ENCODE measurements at regions of chr1 and their contacts with region 1.

Region 1: GRCh38 chr1:109474697-109475096 is 8.4 kb downstream of the SYPL2 start:
- DNase-seq: peak in 1 of 5 donors; percentile 21
- ATAC-seq: peak; percentile 55 to 70 (median 65)
- H3K4me3 ChIP-seq: no peak overlapping the region
- H3K27ac ChIP-seq: no peak overlapping the region
- H3K4me1 ChIP-seq: peaks cover 0 to 21% (median 5%) of the 10 kb centered on the region in 12 donors
- H3K27me3 ChIP-seq: peaks cover 0 to 23% (median 0%) of the 10 kb centered on the region in 9 donors
- CTCF ChIP-seq: no peak
- POLR2A ChIP-seq: no peak

Region 2: GRCh38 chr1:109161858-109162606 is 312.7 kb before region 1 on chr1:
- intact Hi-C with region 1: no loop called
- DNase-seq: peak in 3 of 5 donors; percentile 16 to 57 (median 34)
- ATAC-seq: peak; percentile 38 to 83 (median 74)
- H3K4me3 ChIP-seq: peak overlapping the region in 2 of 12 donors; percentile 25 to 30
- H3K27ac ChIP-seq: peak overlapping the region in 6 of 12 donors; percentile 11 to 77 (median 28)
- H3K4me1 ChIP-seq: peaks cover 0 to 18% (median 3%) of the 10 kb centered on the region in 12 donors
- H3K27me3 ChIP-seq: no peaks in the 10 kb centered on the region
- CTCF ChIP-seq: no peak
- POLR2A ChIP-seq: no peak

Region 3: GRCh38 chr1:109438798-109439297 is 35.8 kb before region 1 on chr1:
- intact Hi-C with region 1: loop called in 1 of 10 experiments (anchors 1 kb)
- DNase-seq: peak in 4 of 5 donors; percentile 30 to 49 (median 36)
- ATAC-seq: peak in 3 of 4 donors; percentile 77 to 87 (median 79)
- H3K4me3 ChIP-seq: no peak overlapping the region
- H3K27ac ChIP-seq: peak overlapping the region in 6 of 12 donors; percentile 24 to 61 (median 51)
- H3K4me1 ChIP-seq: peaks cover 0 to 8% (median 0%) of the 10 kb centered on the region in 12 donors
- H3K27me3 ChIP-seq: peaks cover 0 to 16% (median 0%) of the 10 kb centered on the region in 9 donors
- CTCF ChIP-seq: no peak
- POLR2A ChIP-seq: no peak

Region 4: DNA sequence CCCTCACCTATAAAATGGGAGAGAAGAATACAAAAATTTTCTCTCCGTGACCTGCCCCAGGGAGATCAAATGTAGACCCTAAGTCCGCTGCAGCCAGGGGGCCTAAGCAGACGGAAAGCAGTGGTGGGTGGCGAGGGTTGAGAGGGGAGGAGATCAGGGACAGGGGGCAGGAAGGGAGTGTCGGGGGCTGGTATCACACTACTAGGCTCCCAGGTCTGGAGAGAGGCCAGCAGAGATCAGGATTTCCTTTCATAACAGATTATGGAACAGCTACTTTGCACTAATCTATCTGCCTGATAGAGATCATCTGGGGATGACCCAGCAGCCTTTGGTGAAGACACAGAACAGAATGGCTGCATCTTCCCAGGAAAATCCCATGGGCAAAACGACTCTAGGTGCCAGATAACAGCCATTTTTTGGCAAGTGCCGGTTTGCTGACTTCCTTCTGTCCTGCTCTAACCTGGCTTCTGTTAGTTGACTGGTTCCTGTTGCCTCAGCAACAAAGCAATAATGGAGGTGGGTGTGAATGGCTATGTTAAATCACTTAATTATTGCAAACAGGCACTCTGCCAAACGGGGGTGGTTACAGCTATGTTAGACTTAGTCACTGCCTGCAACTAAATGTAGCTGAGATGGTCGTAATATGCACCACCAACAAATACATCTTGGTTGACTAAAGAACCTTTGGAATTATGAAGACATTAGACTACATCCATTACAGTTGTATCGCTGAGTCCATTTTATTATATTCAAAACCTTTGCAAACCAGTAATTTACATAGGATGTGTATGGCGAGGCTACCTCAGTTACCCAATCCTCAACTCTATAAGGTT is 319.0 kb after region 1 on chr1:
- intact Hi-C with region 1: no loop called
- DNase-seq: peak in 4 of 5 donors; percentile 48 to 75 (median 65)
- ATAC-seq: peak; percentile 44 to 76 (median 52)
- H3K4me3 ChIP-seq: no peak overlapping the region
- H3K27ac ChIP-seq: peak overlapping the region in 10 of 12 donors; percentile 5 to 70 (median 52)
- H3K4me1 ChIP-seq: peaks cover 6 to 82% (median 46%) of the 10 kb centered on the region in 12 donors
- H3K27me3 ChIP-seq: no peaks in the 10 kb centered on the region
- CTCF ChIP-seq: peak in 3 of 12 donors; percentile 7 to 15 (median 11)
- POLR2A ChIP-seq: no peak

Measured in heart left ventricle (tissue), 16 donors.